OCI-LY7 (cell line): ENCODE measurements at regions of chr11 and their contacts with region 1.

Region 1: DNA sequence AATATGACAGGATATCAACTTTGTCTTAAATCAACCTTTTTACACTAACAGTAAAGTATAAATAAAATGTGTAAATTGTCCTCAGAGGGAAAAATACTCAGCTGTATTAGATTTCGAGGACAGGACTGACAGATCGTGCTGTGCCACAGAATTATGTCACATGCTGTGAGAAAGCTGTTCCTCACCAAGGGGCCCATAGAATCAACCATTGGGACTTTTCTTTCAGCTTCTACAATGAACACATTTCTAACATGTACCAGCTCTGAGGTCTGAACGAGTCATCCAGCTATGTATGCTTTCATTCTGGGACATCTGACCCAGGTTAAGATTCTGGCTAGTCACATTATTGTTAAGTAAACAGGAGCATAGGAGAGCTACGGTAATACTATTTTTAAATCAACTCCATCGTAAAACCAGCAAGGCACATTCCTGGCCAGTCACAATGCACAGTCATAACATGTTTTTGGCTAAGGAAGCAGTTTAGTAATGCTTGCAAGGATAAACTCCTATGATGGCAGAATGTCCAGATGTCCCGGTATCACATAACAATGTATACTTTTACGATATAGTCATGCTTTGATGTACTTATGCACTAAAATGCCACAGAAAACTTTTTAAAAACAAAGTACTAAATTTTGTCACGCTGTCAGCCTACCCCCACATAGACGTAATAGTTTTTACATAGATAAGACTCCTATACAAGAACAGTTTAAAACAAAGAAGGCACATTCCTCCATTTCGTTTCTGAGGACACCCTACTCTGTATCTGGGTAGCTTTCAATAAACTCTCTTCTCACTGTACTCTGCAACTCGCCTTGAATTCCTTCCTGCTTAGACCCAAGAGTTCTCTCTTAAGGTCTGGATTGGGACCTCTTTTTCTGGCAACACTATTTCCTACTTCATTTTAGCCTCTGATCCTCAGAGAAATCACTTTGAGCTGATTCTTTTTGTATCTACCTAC is 27.4 kb downstream of the ZNF214 start:
- DNase-seq: no peak
- H3K4me3 ChIP-seq: no peak overlapping the region
- H3K27ac ChIP-seq: no peak overlapping the region
- H3K4me1 ChIP-seq: peaks cover 22% of the 10 kb centered on the region
- CTCF ChIP-seq: no peak

Region 2: GRCh38 chr11:6979365-6979978 is 13.3 kb before region 1 on chr11:
- CTCF ChIA-PET with region 1: no interaction called
- POLR2A ChIA-PET with region 1: interaction called, 6 read pairs
- intact Hi-C with region 1: loop called (anchors 1 kb)
- DNase-seq: no peak
- H3K4me3 ChIP-seq: no peak overlapping the region
- H3K27ac ChIP-seq: no peak overlapping the region
- H3K4me1 ChIP-seq: no peaks in the 10 kb centered on the region
- CTCF ChIP-seq: no peak

Region 3: DNA sequence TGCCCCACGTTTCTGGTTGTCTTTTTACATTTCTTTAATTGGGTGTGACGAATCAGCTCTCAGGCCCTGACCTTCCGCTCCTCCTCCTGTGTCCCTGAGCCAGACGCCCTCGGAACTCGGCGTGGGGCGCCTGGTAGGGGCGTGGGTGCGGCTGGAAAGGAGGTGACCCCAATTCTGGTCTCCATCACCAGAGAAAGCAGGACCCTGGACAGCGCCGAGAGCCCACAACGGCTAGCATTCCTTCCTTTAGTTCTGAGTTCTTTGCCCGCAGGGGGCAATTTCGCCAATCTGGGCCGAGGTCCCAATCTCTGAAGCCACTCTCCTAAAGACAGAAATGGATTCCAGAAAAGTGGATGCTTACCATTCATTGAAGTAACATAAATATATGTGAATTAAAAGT is 84.4 kb after region 1 on chr11:
- CTCF ChIA-PET with region 1: no interaction called
- POLR2A ChIA-PET with region 1: no interaction called
- intact Hi-C with region 1: no loop called
- DNase-seq: no peak
- H3K4me3 ChIP-seq: no peak overlapping the region
- H3K27ac ChIP-seq: no peak overlapping the region
- H3K4me1 ChIP-seq: no peaks in the 10 kb centered on the region
- CTCF ChIP-seq: no peak